ENCODE measurements at regions of chr15 and their contacts with region 1.

Region 1: DNA sequence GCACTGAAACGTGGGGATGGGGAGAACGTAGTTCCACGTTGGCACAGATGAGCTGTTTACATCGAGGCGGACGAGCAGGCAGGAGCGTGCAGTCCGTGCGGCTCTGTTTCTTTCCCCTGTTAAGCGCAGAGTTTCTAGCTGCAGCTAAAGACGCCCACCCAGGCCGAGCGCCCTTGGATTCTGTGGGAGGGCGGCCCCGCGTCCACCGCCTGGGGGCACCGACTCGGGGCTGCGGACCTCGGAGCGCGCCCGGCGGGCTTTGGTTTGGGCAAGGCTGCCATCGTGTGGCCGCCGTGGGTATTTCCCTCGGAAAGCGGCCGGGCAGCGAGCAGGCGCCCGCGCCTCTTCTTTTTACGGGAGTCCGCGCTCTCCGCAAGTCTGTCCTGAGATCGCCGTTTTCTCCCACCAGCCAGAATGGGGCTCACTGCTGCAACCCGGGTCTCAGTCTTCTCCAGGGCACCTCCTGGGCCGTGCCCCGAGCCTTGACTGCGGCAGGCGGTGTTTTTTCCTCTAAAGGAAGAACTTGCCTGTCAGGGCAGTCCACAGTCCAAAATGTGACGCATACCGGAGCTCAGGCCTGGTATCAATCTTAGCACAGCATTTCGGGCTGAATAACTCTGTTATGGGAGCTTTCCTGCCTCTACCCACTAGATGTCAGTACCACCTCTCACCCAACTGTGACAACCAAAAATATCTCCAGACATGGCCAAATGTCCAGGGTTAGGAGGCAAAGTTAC is 219.9 kb upstream of the IGF1R start:
- DNase-seq: peak; percentile 76 to 85
- ATAC-seq: peak; percentile 79 to 93
- H3K4me3 ChIP-seq: peak overlapping the region; percentile 39
- H3K27ac ChIP-seq: peak overlapping the region; percentile 31 to 56; a peak in 4 of 6 replicates
- H3K4me1 ChIP-seq: no peaks in the 10 kb centered on the region
- CTCF ChIP-seq: peak; percentile 94
- EP300 ChIP-seq: no peak
- POLR2A ChIP-seq: no peak
- RAD21 ChIP-seq: peak; percentile 69 to 83

Region 2: DNA sequence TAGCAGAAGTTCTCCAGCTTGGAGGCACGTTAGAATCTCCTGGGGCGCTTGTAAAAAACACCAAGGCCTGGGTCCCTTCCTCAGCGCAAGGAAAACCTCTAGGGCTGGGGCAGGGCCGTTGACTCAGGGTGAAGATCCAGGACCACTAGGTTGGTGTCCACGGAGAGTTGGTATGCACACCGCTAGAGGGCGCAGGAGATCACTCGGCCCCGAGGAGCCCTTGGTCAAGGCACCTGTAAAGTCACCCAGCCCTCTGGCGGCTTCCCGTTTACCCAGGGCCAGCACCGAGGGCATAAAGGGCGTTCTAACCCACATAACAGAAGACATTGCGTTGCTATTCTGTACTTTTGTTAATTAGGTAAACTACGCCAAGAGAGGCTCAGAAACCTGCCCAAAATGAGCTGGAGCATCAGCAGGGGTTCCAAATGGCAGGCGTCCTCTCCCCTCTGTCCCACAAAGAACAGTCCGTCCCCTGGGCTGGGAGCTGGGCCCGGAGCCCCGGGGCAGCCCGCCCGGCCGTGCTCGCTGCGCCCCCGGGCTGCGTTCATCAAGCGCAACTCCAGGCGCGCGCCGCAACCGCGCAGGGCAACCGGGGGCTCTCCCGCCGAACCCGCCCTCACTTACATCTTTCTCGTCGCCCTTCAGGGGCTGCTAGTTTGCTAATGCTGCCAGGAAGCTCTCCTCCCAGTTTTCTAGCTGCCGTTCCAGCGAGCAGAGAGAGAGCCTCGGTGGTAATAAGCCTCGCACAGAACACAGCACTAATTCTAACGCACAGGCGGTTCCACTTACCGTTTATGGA is 135.8 kb before region 1 on chr15:
- CTCF ChIA-PET with region 1: interaction called, 27 read pairs
- POLR2A ChIA-PET with region 1: no interaction called
- DNase-seq: peak; percentile 56 to 74
- ATAC-seq: peak; percentile 84 to 97
- H3K4me3 ChIP-seq: no peak overlapping the region
- H3K27ac ChIP-seq: no peak overlapping the region
- H3K4me1 ChIP-seq: no peaks in the 10 kb centered on the region
- CTCF ChIP-seq: peak; percentile 66
- EP300 ChIP-seq: no peak
- POLR2A ChIP-seq: no peak
- RAD21 ChIP-seq: peak; percentile 34 to 36; a peak in 3 of 5 replicates

Region 3: DNA sequence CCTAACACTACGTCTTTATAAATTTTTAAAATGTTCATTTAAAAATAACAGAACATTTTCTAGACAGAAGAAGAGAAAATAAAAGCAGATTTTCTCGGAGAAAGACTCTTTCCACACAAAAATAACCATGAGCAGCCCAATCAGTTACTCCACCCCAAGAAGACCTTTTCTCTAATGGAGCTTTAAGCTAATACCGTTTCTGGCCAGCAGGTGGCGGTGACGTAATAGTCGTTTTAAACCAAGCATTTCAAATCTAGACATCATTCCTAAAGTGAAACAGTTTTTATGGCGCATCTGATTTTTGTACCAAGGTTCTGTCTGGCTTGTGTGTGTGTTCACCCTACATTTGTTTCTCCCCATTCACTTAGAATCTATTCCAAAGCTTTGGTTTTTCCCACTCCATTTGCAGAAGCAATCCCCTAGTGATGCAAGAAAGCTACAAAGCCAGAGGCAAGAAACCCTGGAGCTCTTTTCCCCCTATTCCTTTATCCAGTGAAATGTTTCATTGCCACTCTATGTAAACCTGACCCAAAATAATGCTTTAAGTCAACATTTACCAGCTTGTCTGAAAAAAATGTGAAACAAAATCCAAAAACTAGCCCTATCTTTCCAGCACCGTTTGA is 116.7 kb before region 1 on chr15:
- CTCF ChIA-PET with region 1: interaction called, 185 read pairs
- POLR2A ChIA-PET with region 1: interaction called, 3 read pairs
- DNase-seq: peak; percentile 80
- ATAC-seq: peak; percentile 62 to 86; a peak in 5 of 6 replicates
- H3K4me3 ChIP-seq: no peak overlapping the region
- H3K27ac ChIP-seq: no peak overlapping the region
- H3K4me1 ChIP-seq: no peaks in the 10 kb centered on the region
- CTCF ChIP-seq: peak; percentile 93
- EP300 ChIP-seq: no peak
- POLR2A ChIP-seq: no peak
- RAD21 ChIP-seq: peak; percentile 69 to 73

Region 4: DNA sequence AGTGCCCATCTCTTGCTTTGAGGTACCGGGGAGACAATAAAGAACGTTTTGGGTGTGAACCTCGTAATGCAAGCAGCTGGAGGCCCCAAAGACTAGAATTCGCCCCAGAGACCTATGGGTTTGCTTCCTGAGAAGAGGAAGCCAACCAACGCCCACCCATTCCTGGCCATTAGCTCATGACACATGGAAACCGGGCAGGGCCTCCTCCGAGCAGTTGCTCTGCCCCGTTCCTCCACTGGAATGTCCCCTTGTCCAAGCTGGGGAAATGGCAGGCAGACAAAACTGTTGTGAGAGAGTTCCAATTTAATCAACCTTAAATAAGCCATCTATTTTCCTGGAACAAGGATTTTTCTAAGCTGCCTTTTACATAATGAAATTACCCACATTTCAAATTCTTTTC is 31.0 kb before region 1 on chr15:
- CTCF ChIA-PET with region 1: interaction called, 14 read pairs
- POLR2A ChIA-PET with region 1: no interaction called
- DNase-seq: no peak
- ATAC-seq: no peak
- H3K4me3 ChIP-seq: no peak overlapping the region
- H3K27ac ChIP-seq: no peak overlapping the region
- H3K4me1 ChIP-seq: 0 out of 3 replicates have a peak, but pooled peaks cover 4% of the 10 kb centered on the region
- CTCF ChIP-seq: no peak
- EP300 ChIP-seq: no peak
- POLR2A ChIP-seq: no peak
- RAD21 ChIP-seq: no peak

Region 5: DNA sequence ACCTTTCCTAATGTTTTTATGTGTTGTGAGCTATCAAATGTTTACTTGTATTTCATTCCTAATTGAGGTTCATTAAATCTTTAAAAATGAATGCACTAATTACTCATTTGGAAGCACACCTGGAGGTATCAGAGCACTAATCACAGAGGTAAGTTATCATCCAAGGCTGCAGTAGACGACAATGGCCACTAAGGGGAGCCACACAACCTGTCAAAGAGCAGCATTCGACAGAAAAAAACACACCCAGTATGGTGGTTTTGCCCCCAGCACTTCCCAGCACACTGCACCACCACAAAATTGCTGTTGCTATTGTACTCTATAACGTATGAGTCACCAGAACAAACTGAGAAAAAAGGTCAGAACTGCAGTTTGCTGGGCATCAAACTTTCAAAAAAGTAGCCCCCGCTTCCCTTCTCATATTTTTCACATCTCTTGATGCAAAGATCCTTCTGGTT is 14.0 kb after region 1 on chr15:
- CTCF ChIA-PET with region 1: interaction called, 115 read pairs
- POLR2A ChIA-PET with region 1: no interaction called
- DNase-seq: peak; percentile 80 to 86
- ATAC-seq: peak; percentile 57 to 86
- H3K4me3 ChIP-seq: no peak overlapping the region
- H3K27ac ChIP-seq: no peak overlapping the region
- H3K4me1 ChIP-seq: peaks cover 8% of the 10 kb centered on the region
- CTCF ChIP-seq: peak; percentile 97
- EP300 ChIP-seq: no peak
- POLR2A ChIP-seq: no peak
- RAD21 ChIP-seq: peak; percentile 97 to 98

Region 6: GRCh38 chr15:99341786-99342185 is 913.4 kb after region 1 on chr15:
- CTCF ChIA-PET with region 1: no interaction called
- POLR2A ChIA-PET with region 1: no interaction called
- DNase-seq: no peak
- ATAC-seq: no peak
- H3K4me3 ChIP-seq: no peak overlapping the region
- H3K27ac ChIP-seq: peak overlapping the region in 1 of 2 experiments; percentile 6; a peak in 2 of 6 replicates
- H3K4me1 ChIP-seq: peaks cover 15% of the 10 kb centered on the region
- CTCF ChIP-seq: no peak
- EP300 ChIP-seq: no peak
- POLR2A ChIP-seq: no peak
- RAD21 ChIP-seq: no peak

Measured in A549 (cell line).